Heart right ventricle (tissue), 16 donors: ENCODE measurements at regions of chr12 and their contacts with region 1.

Region 1: GRCh38 chr12:53492830-53493611 is 6.2 kb downstream of the MAP3K12 start:
- DNase-seq: peak; percentile 89 to 92
- ATAC-seq: peak; percentile 92 to 95 (median 94)
- H3K4me3 ChIP-seq: peak overlapping the region; percentile 4 to 66 (median 60)
- H3K27ac ChIP-seq: peak overlapping the region in 9 of 10 donors; percentile 53 to 92 (median 86)
- H3K4me1 ChIP-seq: peaks cover 0 to 48% (median 26%) of the 10 kb centered on the region in 9 donors
- H3K27me3 ChIP-seq: no peaks in the 10 kb centered on the region
- CTCF ChIP-seq: peak in 3 of 9 donors; percentile 30 to 40 (median 30)

Region 2: GRCh38 chr12:53402871-53403270 is 90.2 kb before region 1 on chr12:
- intact Hi-C with region 1: no loop called
- DNase-seq: no peak
- ATAC-seq: no peak
- H3K4me3 ChIP-seq: no peak overlapping the region
- H3K27ac ChIP-seq: no peak overlapping the region
- H3K4me1 ChIP-seq: peaks cover 0 to 8% (median 0%) of the 10 kb centered on the region in 9 donors
- H3K27me3 ChIP-seq: no peaks in the 10 kb centered on the region
- CTCF ChIP-seq: no peak

Region 3: GRCh38 chr12:53478865-53479264 is 14.2 kb before region 1 on chr12:
- intact Hi-C with region 1: loop called in 1 of 10 experiments (anchors 2 kb)
- DNase-seq: no peak
- ATAC-seq: no peak
- H3K4me3 ChIP-seq: no peak overlapping the region
- H3K27ac ChIP-seq: peak overlapping the region in 1 of 10 donors; percentile 32
- H3K4me1 ChIP-seq: peaks cover 13 to 69% (median 49%) of the 10 kb centered on the region in 9 donors
- H3K27me3 ChIP-seq: no peaks in the 10 kb centered on the region
- CTCF ChIP-seq: no peak

Region 4: DNA sequence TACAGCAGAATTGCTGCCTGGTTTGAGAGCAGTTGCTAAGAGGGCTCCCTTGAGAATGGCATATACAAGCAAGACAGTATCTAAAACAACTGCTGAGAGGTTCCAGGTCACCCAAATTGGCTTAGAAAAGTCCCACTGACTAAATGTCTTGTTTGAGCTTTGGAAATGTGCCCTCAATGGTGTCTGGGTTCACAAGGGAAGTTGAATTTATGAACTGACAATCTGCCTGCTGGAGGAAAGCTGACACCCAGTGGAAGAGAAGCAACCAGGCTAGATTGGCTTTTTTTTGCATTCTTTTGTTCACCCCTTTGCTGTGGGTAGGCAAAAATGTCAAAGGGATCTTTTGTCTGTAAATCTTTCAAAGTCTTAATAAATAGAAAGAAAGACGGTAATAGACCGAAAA is 58.9 kb after region 1 on chr12:
- intact Hi-C with region 1: no loop called
- DNase-seq: no peak
- ATAC-seq: peak in 3 of 8 donors; percentile 17 to 58 (median 37)
- H3K4me3 ChIP-seq: no peak overlapping the region
- H3K27ac ChIP-seq: no peak overlapping the region
- H3K4me1 ChIP-seq: no peaks in the 10 kb centered on the region
- H3K27me3 ChIP-seq: no peaks in the 10 kb centered on the region
- CTCF ChIP-seq: no peak

Region 5: GRCh38 chr12:53675651-53676453 is 182.8 kb after region 1 on chr12 and contains the start of gene ATP5MC2:
- intact Hi-C with region 1: no loop called
- DNase-seq: peak; percentile 96 to 97
- ATAC-seq: peak; percentile 95 to 98 (median 97)
- H3K4me3 ChIP-seq: peak within 1 kb of the TSS; percentile 48 to 98 (median 72)
- H3K27ac ChIP-seq: peak within 1 kb of the TSS; percentile 87 to 98 (median 90)
- H3K4me1 ChIP-seq: peaks cover 3 to 51% (median 34%) of the 10 kb centered on the region in 9 donors
- H3K27me3 ChIP-seq: peaks cover 0 to 12% (median 0%) of the 10 kb centered on the region in 7 donors
- CTCF ChIP-seq: peak; percentile 96 to 100 (median 99)
- total RNA-seq, gene ATP5MC2: 499 to 627 (median 546) TPM